Sciatic nerve (tissue), 2 donors: ENCODE measurements at regions of chr22 and their contacts with region 1.

Region 1: DNA sequence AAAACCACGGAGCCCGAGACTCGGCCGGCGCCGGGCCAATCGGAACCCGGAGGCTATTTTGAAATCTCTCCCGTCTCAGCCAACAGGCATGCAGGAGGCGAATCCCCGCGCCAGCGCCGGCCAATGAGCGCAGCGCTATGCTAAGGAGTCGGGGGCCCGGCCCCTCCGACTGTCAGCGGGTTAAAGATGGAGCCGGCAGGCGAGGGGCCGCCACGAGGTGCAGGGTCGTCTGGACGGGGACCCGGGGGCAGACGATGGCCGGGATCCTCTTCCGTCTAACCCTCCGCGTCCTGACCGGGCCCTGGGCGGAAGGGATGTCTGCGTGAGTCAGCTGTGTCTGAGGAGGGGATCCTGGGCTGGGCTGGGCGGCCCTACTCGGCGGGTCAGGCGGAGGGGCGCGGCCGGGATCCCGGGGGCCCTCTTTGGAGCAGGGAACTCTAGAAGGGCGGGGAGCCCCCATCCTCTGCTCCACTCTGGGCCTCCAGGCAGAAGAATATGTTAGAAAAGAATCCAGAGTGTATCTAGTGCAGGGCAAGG is 10.0 kb downstream of the SDF2L1 start:
- DNase-seq: peak; percentile 92
- ATAC-seq: peak; percentile 95

Region 2: DNA sequence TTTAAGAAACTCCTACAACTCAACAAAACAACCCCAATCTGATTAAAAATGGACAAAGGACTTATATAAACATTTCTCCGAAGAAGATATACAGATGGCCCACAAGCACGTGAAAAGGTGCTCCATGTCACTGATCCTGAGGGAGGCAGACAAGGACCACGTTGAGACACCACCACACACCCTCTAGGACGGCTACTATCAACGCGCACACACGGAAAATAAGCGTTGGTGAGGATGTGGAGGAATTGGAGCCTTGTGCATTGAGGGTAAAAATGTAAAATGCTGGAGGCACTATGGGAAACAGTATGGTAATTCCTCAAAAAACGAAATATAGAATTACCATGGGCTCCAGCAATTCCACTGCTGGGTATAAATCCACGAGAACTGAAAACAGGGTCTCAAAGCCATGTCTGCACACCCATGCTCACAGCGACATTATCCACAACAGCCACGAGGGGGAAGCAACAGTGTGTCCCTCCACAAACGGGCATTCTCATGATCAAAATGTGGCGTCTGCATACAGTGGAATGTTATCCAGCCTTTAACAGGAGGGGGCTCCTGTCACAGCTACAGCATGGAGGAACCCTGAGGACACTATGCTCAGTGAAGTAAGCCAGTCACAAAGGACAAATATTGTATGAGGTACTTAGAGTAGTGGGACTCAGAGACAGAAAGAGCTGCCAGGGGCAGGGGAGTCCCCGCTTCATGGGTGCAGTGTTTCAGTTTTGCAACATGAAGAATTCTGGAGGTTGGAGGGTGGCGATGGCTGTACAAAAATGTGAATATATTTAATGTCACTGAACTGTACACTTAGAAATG is 61.0 kb after region 1 on chr22:
- intact Hi-C with region 1: no loop called
- DNase-seq: peak; percentile 79
- ATAC-seq: peak; percentile 93

Region 3: GRCh38 chr22:21766691-21767462 is 114.8 kb after region 1 on chr22:
- intact Hi-C with region 1: no loop called
- DNase-seq: no peak
- ATAC-seq: no peak

Region 4: GRCh38 chr22:23204541-23205157 is 1552.6 kb after region 1 on chr22:
- intact Hi-C with region 1: loop called (anchors 10 kb)
- DNase-seq: no peak
- ATAC-seq: peak; percentile 55